Activated naive CD4-positive, alpha-beta T cell treated with anti-CD3 and anti-CD28 coated beads for 36 hours (primary cell): ENCODE measurements at regions of chr13 and their contacts with region 1.

Region 1: GRCh38 chr13:45527699-45528474 is 63.1 kb downstream of the COG3 start:
- DNase-seq: no peak
- H3K4me3 Mint-ChIP-seq: no peak overlapping the region
- H3K27ac Mint-ChIP-seq: no peak overlapping the region
- H3K4me1 Mint-ChIP-seq: no peaks in the 10 kb centered on the region
- H3K27me3 Mint-ChIP-seq: no peaks in the 10 kb centered on the region

Region 2: GRCh38 chr13:45119469-45119990 is 408.4 kb before region 1 on chr13:
- CTCF ChIA-PET with region 1: no interaction called
- intact Hi-C with region 1: no loop called
- DNase-seq: peak; percentile 75
- H3K4me3 Mint-ChIP-seq: no peak overlapping the region
- H3K27ac Mint-ChIP-seq: no peak overlapping the region
- H3K4me1 Mint-ChIP-seq: peaks cover 5% of the 10 kb centered on the region
- H3K27me3 Mint-ChIP-seq: no peaks in the 10 kb centered on the region

Region 3: GRCh38 chr13:45575146-45575829 is 47.4 kb after region 1 on chr13:
- CTCF ChIA-PET with region 1: no interaction called
- intact Hi-C with region 1: loop called (anchors 1 kb)
- DNase-seq: no peak
- H3K4me3 Mint-ChIP-seq: no peak overlapping the region
- H3K27ac Mint-ChIP-seq: no peak overlapping the region
- H3K4me1 Mint-ChIP-seq: no peaks in the 10 kb centered on the region
- H3K27me3 Mint-ChIP-seq: no peaks in the 10 kb centered on the region